Activated T-helper 2 cell treated with anti-CD3 and anti-CD28 coated beads, Interferon-gamma antibody, Interleukin-2, Interleukin-4, amounts not matched to agents 10 μg/mL and 5 μg/mL and 100 μg/mL, durations not matched to agents 14 hours and 24 hours and 36 hours (primary cell): ENCODE measurements at regions of chr9 and their contacts with region 1.

Region 1: GRCh38 chr9:125233678-125234077 is 7.5 kb downstream of the HSPA5 start:
- DNase-seq: no peak
- H3K4me3 Mint-ChIP-seq: no peak overlapping the region
- H3K27ac Mint-ChIP-seq: no peak overlapping the region
- H3K4me1 Mint-ChIP-seq: peaks cover 29% of the 10 kb centered on the region
- H3K27me3 Mint-ChIP-seq: no peaks in the 10 kb centered on the region

Region 2: DNA sequence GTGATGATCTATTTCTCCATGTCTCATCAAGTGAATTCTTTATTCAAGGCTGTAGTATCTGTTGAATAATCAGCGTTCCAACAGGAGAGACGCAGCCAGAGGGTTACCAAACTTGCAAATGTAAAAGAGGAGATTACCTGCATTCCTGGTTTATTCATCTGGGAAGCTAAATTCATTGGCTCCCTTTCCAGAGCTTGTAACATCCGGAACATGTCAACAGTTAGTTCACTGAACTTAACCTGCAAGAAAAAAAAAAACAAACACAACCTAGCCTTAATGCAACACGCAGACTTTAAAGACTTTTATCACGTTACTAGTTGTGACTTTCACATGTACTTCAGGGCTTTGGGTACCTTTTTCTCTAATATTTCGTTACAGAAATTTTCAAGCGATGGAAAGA is 230.3 kb before region 1 on chr9:
- intact Hi-C with region 1: no loop called
- DNase-seq: no peak
- H3K4me3 Mint-ChIP-seq: no peak overlapping the region
- H3K27ac Mint-ChIP-seq: no peak overlapping the region
- H3K4me1 Mint-ChIP-seq: no peaks in the 10 kb centered on the region
- H3K27me3 Mint-ChIP-seq: no peaks in the 10 kb centered on the region

Region 3: DNA sequence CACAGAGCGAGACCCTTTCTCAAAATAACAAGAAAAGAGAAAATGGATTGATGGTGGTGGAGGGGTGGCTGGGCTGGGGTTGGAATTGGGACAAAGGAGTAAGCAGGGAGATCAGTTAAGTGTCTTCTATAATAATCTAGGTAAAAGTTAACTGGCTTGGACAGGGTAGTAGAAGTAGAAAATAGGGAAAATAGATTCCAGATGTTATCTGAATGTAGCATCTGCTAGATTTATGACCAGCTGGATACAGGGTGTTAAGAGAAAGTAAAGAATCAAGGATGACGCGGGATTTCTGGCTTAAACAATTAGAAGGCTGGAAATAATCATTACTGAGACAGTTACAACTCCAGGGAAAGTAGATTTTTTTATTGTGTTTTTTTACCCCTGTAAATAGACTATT is 57.0 kb before region 1 on chr9:
- intact Hi-C with region 1: no loop called
- DNase-seq: no peak
- H3K4me3 Mint-ChIP-seq: no peak overlapping the region
- H3K27ac Mint-ChIP-seq: peak overlapping the region; percentile 5
- H3K4me1 Mint-ChIP-seq: peaks cover 29% of the 10 kb centered on the region
- H3K27me3 Mint-ChIP-seq: no peaks in the 10 kb centered on the region

Region 4: GRCh38 chr9:125296833-125297372 is 63.2 kb after region 1 on chr9:
- intact Hi-C with region 1: no loop called
- DNase-seq: no peak
- H3K4me3 Mint-ChIP-seq: no peak overlapping the region
- H3K27ac Mint-ChIP-seq: no peak overlapping the region
- H3K4me1 Mint-ChIP-seq: no peaks in the 10 kb centered on the region
- H3K27me3 Mint-ChIP-seq: no peaks in the 10 kb centered on the region

Region 5: DNA sequence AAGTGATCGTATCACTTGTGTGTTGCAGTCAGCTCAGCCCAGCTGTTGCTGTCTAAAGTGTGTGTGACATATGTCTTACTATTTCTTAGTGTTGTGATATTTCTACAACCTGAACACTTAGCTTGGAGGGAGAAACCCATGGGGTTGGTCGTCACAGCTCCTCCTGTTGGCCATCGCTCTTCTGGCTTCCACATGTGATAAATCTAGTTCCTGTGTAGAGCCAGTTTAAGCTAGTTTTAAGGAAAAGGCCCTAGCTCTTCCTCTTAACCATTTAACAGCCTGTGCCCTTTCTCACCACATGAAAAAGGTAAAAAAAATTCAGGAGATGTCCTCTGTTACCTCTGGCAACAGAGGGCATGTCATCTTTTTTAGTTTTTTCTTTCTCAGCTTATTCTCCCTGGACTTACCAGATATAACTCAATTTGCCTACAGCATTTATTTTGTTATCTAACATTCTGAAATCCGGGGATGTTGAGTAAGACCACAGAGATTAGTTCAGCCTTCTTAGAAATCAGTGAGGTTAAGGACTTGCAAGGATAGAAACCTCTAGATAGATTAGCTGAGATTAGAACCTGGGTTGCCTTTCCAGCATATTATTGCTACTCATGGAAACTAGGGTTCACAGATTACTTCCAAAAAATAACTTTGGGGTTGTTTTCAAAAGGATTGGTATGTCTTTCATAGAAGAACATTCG is 128.3 kb after region 1 on chr9:
- intact Hi-C with region 1: loop called (anchors 10 kb)
- DNase-seq: no peak
- H3K4me3 Mint-ChIP-seq: no peak overlapping the region
- H3K27ac Mint-ChIP-seq: no peak overlapping the region
- H3K4me1 Mint-ChIP-seq: peaks cover 4% of the 10 kb centered on the region
- H3K27me3 Mint-ChIP-seq: no peaks in the 10 kb centered on the region